CD4-positive, alpha-beta T cell (primary cell): ENCODE measurements at regions of chr6 and their contacts with region 1.

Region 1: GRCh38 chr6:154675602-154676088 is 57.6 kb upstream of the SCAF8 start:
- DNase-seq: peak; percentile 73 to 95 (median 84)
- ATAC-seq: peak; percentile 100
- H3K4me3 ChIP-seq: no peak overlapping the region
- H3K4me3 Mint-ChIP-seq: no peak overlapping the region
- H3K27ac ChIP-seq: no peak overlapping the region
- H3K27ac Mint-ChIP-seq: no peak overlapping the region
- H3K4me1 ChIP-seq: no peaks in the 10 kb centered on the region
- H3K4me1 Mint-ChIP-seq: no peaks in the 10 kb centered on the region
- H3K27me3 ChIP-seq: no peaks in the 10 kb centered on the region
- H3K27me3 Mint-ChIP-seq: no peaks in the 10 kb centered on the region
- CTCF ChIP-seq: peak; percentile 100

Region 2: GRCh38 chr6:154156135-154156896 is 519.3 kb before region 1 on chr6:
- CTCF ChIA-PET with region 1: no interaction called
- POLR2A ChIA-PET with region 1: no interaction called
- intact Hi-C with region 1: loop called (anchors 2 to 5 kb)
- DNase-seq: peak; percentile 36 to 84 (median 58)
- ATAC-seq: peak; percentile 93
- H3K4me3 ChIP-seq: peak overlapping the region; percentile 44
- H3K4me3 Mint-ChIP-seq: peak overlapping the region; percentile 80
- H3K27ac ChIP-seq: peak overlapping the region; percentile 75 to 77
- H3K27ac Mint-ChIP-seq: peak overlapping the region; percentile 93
- H3K4me1 ChIP-seq: peaks cover 33% of the 10 kb centered on the region
- H3K4me1 Mint-ChIP-seq: peaks cover 68% of the 10 kb centered on the region
- H3K27me3 ChIP-seq: no peaks in the 10 kb centered on the region
- H3K27me3 Mint-ChIP-seq: no peaks in the 10 kb centered on the region
- CTCF ChIP-seq: peak; percentile 78

Region 3: GRCh38 chr6:154733012-154733625 is 57.5 kb after region 1 on chr6 and contains the start of gene SCAF8:
- CTCF ChIA-PET with region 1: interaction called, 7 read pairs
- POLR2A ChIA-PET with region 1: no interaction called
- intact Hi-C with region 1: loop called (anchors 1 to 2 kb)
- DNase-seq: peak; percentile 70 to 95 (median 83)
- ATAC-seq: peak; percentile 65
- H3K4me3 ChIP-seq: peak within 1 kb of the TSS; percentile 87
- H3K4me3 Mint-ChIP-seq: peak within 1 kb of the TSS; percentile 95
- H3K27ac ChIP-seq: peak within 1 kb of the TSS; percentile 95 to 98
- H3K27ac Mint-ChIP-seq: peak within 1 kb of the TSS; percentile 86
- H3K4me1 ChIP-seq: peaks cover 41% of the 10 kb centered on the region
- H3K4me1 Mint-ChIP-seq: peaks cover 36% of the 10 kb centered on the region
- H3K27me3 ChIP-seq: no peaks in the 10 kb centered on the region
- H3K27me3 Mint-ChIP-seq: no peaks in the 10 kb centered on the region
- CTCF ChIP-seq: peak; percentile 69
- total RNA-seq, gene SCAF8: 82.6 to 83.8 TPM

Region 4: DNA sequence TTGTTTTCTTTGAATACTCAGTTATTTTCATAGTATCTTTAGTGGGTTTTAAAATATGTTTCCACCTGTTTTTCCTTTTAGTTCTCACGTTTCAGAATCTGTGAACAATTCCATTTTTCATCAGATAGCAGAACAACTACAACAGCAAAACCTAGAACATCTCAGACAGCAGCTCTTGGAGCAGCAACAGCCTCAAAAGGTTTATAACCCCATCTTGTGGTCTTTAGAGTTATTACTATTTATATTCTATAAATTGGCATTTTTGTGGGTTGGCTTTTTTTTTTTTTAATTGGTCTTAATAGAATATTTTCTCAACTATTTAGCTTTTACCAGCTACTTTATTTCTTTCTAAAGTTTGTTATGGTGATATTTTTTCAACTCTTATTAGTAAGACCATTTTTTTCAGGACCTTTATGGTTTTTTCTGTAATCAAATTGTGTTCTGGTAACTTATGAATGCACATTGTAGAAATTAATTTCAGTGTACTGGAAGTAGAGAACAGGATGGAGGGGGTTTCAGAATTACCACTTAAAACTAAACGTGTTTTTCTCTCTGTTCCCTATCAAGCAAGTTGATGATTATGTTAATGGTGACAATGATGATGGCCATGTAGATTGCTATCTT is 129.8 kb after region 1 on chr6:
- CTCF ChIA-PET with region 1: interaction called, 99 read pairs
- POLR2A ChIA-PET with region 1: interaction called, 18 read pairs
- intact Hi-C with region 1: loop called (anchors 1 kb)
- DNase-seq: peak in 4 of 14 experiments; percentile 12 to 65 (median 60)
- ATAC-seq: peak; percentile 88
- H3K4me3 ChIP-seq: no peak overlapping the region
- H3K4me3 Mint-ChIP-seq: no peak overlapping the region
- H3K27ac ChIP-seq: no peak overlapping the region
- H3K27ac Mint-ChIP-seq: peak overlapping the region; percentile 10
- H3K4me1 ChIP-seq: no peaks in the 10 kb centered on the region
- H3K4me1 Mint-ChIP-seq: peaks cover 6% of the 10 kb centered on the region
- H3K27me3 ChIP-seq: no peaks in the 10 kb centered on the region
- H3K27me3 Mint-ChIP-seq: no peaks in the 10 kb centered on the region
- CTCF ChIP-seq: peak; percentile 72

Region 5: GRCh38 chr6:155062866-155063341 is 387.3 kb after region 1 on chr6:
- CTCF ChIA-PET with region 1: no interaction called
- POLR2A ChIA-PET with region 1: no interaction called
- intact Hi-C with region 1: no loop called
- DNase-seq: no peak
- ATAC-seq: no peak
- H3K4me3 ChIP-seq: no peak overlapping the region
- H3K4me3 Mint-ChIP-seq: no peak overlapping the region
- H3K27ac ChIP-seq: no peak overlapping the region
- H3K27ac Mint-ChIP-seq: no peak overlapping the region
- H3K4me1 ChIP-seq: no peaks in the 10 kb centered on the region
- H3K4me1 Mint-ChIP-seq: no peaks in the 10 kb centered on the region
- H3K27me3 ChIP-seq: no peaks in the 10 kb centered on the region
- H3K27me3 Mint-ChIP-seq: no peaks in the 10 kb centered on the region
- CTCF ChIP-seq: no peak

Region 6: DNA sequence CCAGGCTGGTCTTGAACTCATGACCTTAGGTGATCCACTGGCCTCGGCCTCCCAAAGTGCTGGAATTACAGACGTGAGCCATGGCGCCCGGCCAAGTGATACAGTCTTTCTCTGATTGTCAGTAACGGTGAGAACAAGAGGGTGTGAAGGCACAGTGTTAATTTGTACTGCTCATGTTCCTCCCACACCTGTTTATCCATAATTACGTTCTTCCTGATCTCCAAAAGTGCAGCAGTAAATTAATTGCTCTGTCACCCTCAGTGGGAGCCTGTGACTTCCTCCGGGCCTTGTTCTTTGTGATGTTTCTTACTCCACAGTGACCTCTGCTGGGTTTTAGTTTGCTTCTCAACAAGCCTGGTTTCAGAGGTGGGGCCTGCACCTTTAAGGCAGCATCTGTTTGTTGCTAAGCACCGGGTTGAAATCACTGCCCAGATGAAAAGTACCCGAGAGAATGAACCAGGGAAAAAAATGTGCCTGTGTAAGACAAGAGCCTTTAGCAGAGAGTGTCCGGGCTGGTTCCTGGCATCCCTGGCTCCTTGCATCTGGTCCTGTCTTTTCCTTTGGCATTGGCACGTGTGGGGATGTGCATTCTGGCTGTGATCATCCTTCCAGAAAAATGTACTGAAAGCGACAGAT is 499.0 kb after region 1 on chr6:
- CTCF ChIA-PET with region 1: no interaction called
- POLR2A ChIA-PET with region 1: no interaction called
- intact Hi-C with region 1: loop called (anchors 1 to 2 kb)
- DNase-seq: peak; percentile 25 to 85 (median 42)
- ATAC-seq: peak; percentile 58
- H3K4me3 ChIP-seq: no peak overlapping the region
- H3K4me3 Mint-ChIP-seq: no peak overlapping the region
- H3K27ac ChIP-seq: no peak overlapping the region
- H3K27ac Mint-ChIP-seq: no peak overlapping the region
- H3K4me1 ChIP-seq: peaks cover 20% of the 10 kb centered on the region
- H3K4me1 Mint-ChIP-seq: peaks cover 35% of the 10 kb centered on the region
- H3K27me3 ChIP-seq: no peaks in the 10 kb centered on the region
- H3K27me3 Mint-ChIP-seq: no peaks in the 10 kb centered on the region
- CTCF ChIP-seq: peak; percentile 49